ENCODE measurements at regions of chr10 and their contacts with region 1.

Region 1: DNA sequence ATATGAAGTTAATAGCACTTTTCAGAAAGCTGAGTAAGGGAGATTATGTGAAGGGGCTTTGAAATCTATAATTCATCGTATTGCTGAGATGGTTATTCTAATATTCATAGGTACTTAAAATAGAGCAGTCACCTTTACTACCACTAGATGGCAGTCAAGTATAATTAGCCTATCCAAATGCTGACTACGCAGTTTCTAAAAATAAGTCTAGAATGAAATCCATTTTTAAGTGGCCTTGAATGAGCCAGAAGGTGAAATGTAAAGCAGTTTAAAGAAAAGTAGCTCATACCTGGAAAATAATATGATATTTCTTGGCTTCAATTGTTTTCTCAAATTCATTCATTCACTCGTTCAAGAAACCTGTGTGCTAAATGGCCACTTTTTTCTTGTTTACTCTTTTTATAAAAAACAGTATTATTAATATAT is 1277.1 kb downstream of the GATA3 start:
- DNase-seq: peak in 7 of 9 donors; percentile 17 to 60 (median 43)
- ATAC-seq: peak; percentile 75
- H3K4me3 ChIP-seq: no peak overlapping the region
- H3K4me3 Mint-ChIP-seq: no peak overlapping the region
- H3K27ac ChIP-seq: no peak overlapping the region
- H3K27ac Mint-ChIP-seq: no peak overlapping the region
- H3K4me1 ChIP-seq: no peaks in the 10 kb centered on the region
- H3K4me1 Mint-ChIP-seq: no peaks in the 10 kb centered on the region
- H3K27me3 ChIP-seq: no peaks in the 10 kb centered on the region
- H3K27me3 Mint-ChIP-seq: peaks cover 10 to 35% (median 21%) of the 10 kb centered on the region in 5 donors

Region 2: GRCh38 chr10:9342885-9343570 is 11.4 kb after region 1 on chr10:
- CTCF ChIA-PET with region 1: interaction called, 6 read pairs
- POLR2A ChIA-PET with region 1: no interaction called
- intact Hi-C with region 1: loop called in 1 of 2 experiments (anchors 2 kb)
- DNase-seq: peak in 6 of 9 donors; percentile 21 to 55 (median 39)
- ATAC-seq: no peak
- H3K4me3 ChIP-seq: no peak overlapping the region
- H3K4me3 Mint-ChIP-seq: no peak overlapping the region
- H3K27ac ChIP-seq: no peak overlapping the region
- H3K27ac Mint-ChIP-seq: no peak overlapping the region
- H3K4me1 ChIP-seq: no peaks in the 10 kb centered on the region
- H3K4me1 Mint-ChIP-seq: peaks cover 0 to 17% (median 13%) of the 10 kb centered on the region in 7 donors
- H3K27me3 ChIP-seq: no peaks in the 10 kb centered on the region
- H3K27me3 Mint-ChIP-seq: peaks cover 0 to 8% (median 4%) of the 10 kb centered on the region in 5 donors

Region 3: GRCh38 chr10:9362721-9363120 is 31.1 kb after region 1 on chr10:
- CTCF ChIA-PET with region 1: no interaction called
- POLR2A ChIA-PET with region 1: no interaction called
- intact Hi-C with region 1: no loop called
- DNase-seq: peak in 6 of 9 donors; percentile 3 to 32 (median 15)
- ATAC-seq: peak; percentile 26
- H3K4me3 ChIP-seq: no peak overlapping the region
- H3K4me3 Mint-ChIP-seq: peak overlapping the region in 8 of 10 donors; percentile 21 to 74 (median 66)
- H3K27ac ChIP-seq: no peak overlapping the region
- H3K27ac Mint-ChIP-seq: peak overlapping the region in 8 of 9 donors; percentile 70 to 84 (median 78)
- H3K4me1 ChIP-seq: peaks cover 0 to 17% of the 10 kb centered on the region in 2 donors
- H3K4me1 Mint-ChIP-seq: peaks cover 6 to 40% (median 26%) of the 10 kb centered on the region in 7 donors
- H3K27me3 ChIP-seq: no peaks in the 10 kb centered on the region
- H3K27me3 Mint-ChIP-seq: peaks cover 0 to 7% (median 0%) of the 10 kb centered on the region in 5 donors

Region 4: GRCh38 chr10:9390516-9390915 is 58.9 kb after region 1 on chr10:
- CTCF ChIA-PET with region 1: no interaction called
- POLR2A ChIA-PET with region 1: no interaction called
- intact Hi-C with region 1: no loop called
- DNase-seq: no peak
- ATAC-seq: no peak
- H3K4me3 ChIP-seq: no peak overlapping the region
- H3K4me3 Mint-ChIP-seq: no peak overlapping the region
- H3K27ac ChIP-seq: no peak overlapping the region
- H3K27ac Mint-ChIP-seq: no peak overlapping the region
- H3K4me1 ChIP-seq: no peaks in the 10 kb centered on the region
- H3K4me1 Mint-ChIP-seq: no peaks in the 10 kb centered on the region
- H3K27me3 ChIP-seq: no peaks in the 10 kb centered on the region
- H3K27me3 Mint-ChIP-seq: peaks cover 0 to 37% (median 6%) of the 10 kb centered on the region in 5 donors

Region 5: DNA sequence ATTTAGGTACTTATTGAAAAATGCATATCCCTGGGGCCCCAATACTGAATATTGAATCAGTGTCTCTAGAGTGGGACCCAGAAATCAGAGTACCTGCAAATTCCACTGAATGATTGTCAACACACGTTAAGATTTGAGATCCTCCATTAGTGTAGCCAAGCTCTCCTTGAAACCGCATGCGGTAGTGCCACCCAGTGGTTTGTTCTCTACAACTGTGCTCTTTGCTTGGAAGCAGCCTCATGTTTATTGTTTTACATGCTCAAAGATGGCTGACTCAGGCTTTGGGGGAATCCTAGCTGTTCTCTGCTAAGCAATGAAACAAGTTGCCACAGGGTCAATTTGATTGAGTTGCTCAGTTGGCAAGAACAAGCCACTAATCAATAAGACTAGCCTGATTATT is 1345.9 kb after region 1 on chr10:
- CTCF ChIA-PET with region 1: no interaction called
- POLR2A ChIA-PET with region 1: no interaction called
- intact Hi-C with region 1: loop called in 1 of 2 experiments (anchors 5 kb)
- DNase-seq: no peak
- ATAC-seq: peak; percentile 64
- H3K4me3 ChIP-seq: no peak overlapping the region
- H3K4me3 Mint-ChIP-seq: no peak overlapping the region
- H3K27ac ChIP-seq: no peak overlapping the region
- H3K27ac Mint-ChIP-seq: no peak overlapping the region
- H3K4me1 ChIP-seq: no peaks in the 10 kb centered on the region
- H3K4me1 Mint-ChIP-seq: no peaks in the 10 kb centered on the region
- H3K27me3 ChIP-seq: no peaks in the 10 kb centered on the region
- H3K27me3 Mint-ChIP-seq: peaks cover 3 to 17% (median 11%) of the 10 kb centered on the region in 5 donors

Region 6: GRCh38 chr10:11036407-11037011 is 1704.9 kb after region 1 on chr10:
- CTCF ChIA-PET with region 1: no interaction called
- POLR2A ChIA-PET with region 1: no interaction called
- intact Hi-C with region 1: loop called in 1 of 2 experiments (anchors 10 kb)
- DNase-seq: no peak
- ATAC-seq: no peak
- H3K4me3 ChIP-seq: no peak overlapping the region
- H3K4me3 Mint-ChIP-seq: no peak overlapping the region
- H3K27ac ChIP-seq: no peak overlapping the region
- H3K27ac Mint-ChIP-seq: no peak overlapping the region
- H3K4me1 ChIP-seq: no peaks in the 10 kb centered on the region
- H3K4me1 Mint-ChIP-seq: peaks cover 0 to 8% (median 0%) of the 10 kb centered on the region in 7 donors
- H3K27me3 ChIP-seq: no peaks in the 10 kb centered on the region
- H3K27me3 Mint-ChIP-seq: peaks cover 3 to 58% (median 22%) of the 10 kb centered on the region in 5 donors